Naive thymus-derived CD4-positive, alpha-beta T cell (primary cell): ENCODE measurements at regions of chr2 and their contacts with region 1.

Region 1: DNA sequence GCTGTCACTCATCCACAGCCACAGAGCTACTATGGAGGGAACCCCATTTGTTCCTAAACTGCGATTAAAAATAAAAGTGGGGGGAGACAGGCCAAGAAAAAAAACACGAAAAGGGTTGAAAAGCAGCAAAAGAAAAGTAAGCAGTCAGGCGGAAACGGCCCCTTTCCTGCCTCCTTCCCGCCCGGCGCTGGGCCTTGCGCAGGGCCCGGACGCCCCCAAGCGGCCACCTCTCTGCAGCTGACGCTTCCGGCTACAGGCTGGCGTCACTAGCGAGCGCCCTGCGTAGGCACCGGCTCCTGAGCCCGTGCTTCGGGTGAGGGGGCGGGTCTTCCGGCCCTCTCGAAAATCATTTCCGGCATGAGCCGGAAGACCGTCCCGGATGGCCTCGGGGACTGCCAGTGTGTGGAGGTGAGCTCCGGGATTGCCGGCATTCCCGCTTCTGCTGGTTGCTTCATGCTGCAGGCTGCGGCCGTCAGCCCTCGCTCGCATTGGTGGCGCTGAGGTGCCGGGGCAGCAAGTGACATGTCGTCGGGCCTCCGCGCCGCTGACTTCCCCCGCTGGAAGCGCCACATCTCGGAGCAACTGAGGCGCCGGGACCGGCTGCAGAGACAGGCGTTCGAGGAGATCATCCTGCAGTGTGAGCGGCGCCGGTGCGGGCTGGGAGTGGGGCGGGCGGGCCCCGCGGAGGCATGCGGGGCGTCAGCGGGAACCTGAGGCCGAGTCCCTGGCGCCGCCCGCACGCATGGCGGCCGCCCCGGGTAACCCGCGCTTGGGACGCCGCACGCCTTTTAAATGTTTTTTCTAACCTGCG is at the start of gene ATG16L1:
- DNase-seq: peak; percentile 85 to 96 (median 95)
- ATAC-seq: peak; percentile 99
- H3K4me3 ChIP-seq: peak within 1 kb of the TSS; percentile 80
- H3K4me3 Mint-ChIP-seq: peak within 1 kb of the TSS; percentile 86 to 96 (median 92)
- H3K27ac ChIP-seq: peak within 1 kb of the TSS; percentile 81
- H3K27ac Mint-ChIP-seq: peak within 1 kb of the TSS; percentile 89 to 98 (median 93)
- H3K4me1 ChIP-seq: peaks cover 36 to 50% of the 10 kb centered on the region in 2 donors
- H3K4me1 Mint-ChIP-seq: peaks cover 47 to 81% (median 74%) of the 10 kb centered on the region in 7 donors
- H3K27me3 ChIP-seq: no peaks in the 10 kb centered on the region
- H3K27me3 Mint-ChIP-seq: no peaks in the 10 kb centered on the region
- total RNA-seq, gene ATG16L1: 61.7 to 115 (median 83.3) TPM

Region 2: GRCh38 chr2:232611551-232612218 is 639.8 kb before region 1 on chr2:
- CTCF ChIA-PET with region 1: no interaction called
- POLR2A ChIA-PET with region 1: no interaction called
- intact Hi-C with region 1: loop called (anchors 1 kb)
- DNase-seq: peak; percentile 18 to 72 (median 48)
- ATAC-seq: peak; percentile 72
- H3K4me3 ChIP-seq: no peak overlapping the region
- H3K4me3 Mint-ChIP-seq: no peak overlapping the region
- H3K27ac ChIP-seq: no peak overlapping the region
- H3K27ac Mint-ChIP-seq: no peak overlapping the region
- H3K4me1 ChIP-seq: no peaks in the 10 kb centered on the region
- H3K4me1 Mint-ChIP-seq: no peaks in the 10 kb centered on the region
- H3K27me3 ChIP-seq: no peaks in the 10 kb centered on the region
- H3K27me3 Mint-ChIP-seq: no peaks in the 10 kb centered on the region

Region 3: GRCh38 chr2:232838406-232838874 is 413.1 kb before region 1 on chr2:
- CTCF ChIA-PET with region 1: no interaction called
- POLR2A ChIA-PET with region 1: no interaction called
- intact Hi-C with region 1: loop called in 1 of 2 experiments (anchors 1 kb)
- DNase-seq: peak in 7 of 9 donors; percentile 8 to 57 (median 10)
- ATAC-seq: peak; percentile 83
- H3K4me3 ChIP-seq: no peak overlapping the region
- H3K4me3 Mint-ChIP-seq: peak overlapping the region in 8 of 10 donors; percentile 20 to 74 (median 39)
- H3K27ac ChIP-seq: peak overlapping the region; percentile 40
- H3K27ac Mint-ChIP-seq: peak overlapping the region; percentile 53 to 89 (median 83)
- H3K4me1 ChIP-seq: peaks cover 13 to 15% of the 10 kb centered on the region in 2 donors
- H3K4me1 Mint-ChIP-seq: peaks cover 27 to 39% (median 35%) of the 10 kb centered on the region in 7 donors
- H3K27me3 ChIP-seq: no peaks in the 10 kb centered on the region
- H3K27me3 Mint-ChIP-seq: no peaks in the 10 kb centered on the region

Region 4: DNA sequence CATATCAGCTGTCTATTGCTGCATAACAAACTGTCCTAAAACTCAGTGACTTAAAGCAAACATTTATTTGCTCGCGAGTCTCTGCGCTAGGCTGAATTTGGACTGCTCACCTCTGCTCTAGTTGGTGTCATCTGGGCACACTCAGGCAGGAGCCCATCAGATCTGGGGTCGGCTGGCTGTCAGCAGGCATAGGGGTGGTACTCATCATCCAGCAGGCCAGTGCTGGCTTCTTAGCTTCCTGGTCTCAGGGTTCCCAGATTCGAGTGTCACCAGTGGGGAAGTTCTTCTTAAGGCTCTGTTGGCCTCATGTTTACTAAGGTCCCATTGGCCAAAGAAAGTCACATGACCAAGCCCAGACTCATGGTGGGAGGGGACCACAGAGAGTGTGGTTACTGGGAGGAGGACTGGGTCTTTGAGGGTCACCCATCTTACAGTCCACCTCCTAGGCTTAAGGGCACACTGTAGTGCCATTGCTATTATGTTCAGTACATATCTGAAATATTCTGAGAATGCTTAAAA is 71.6 kb before region 1 on chr2:
- CTCF ChIA-PET with region 1: interaction called, 4 read pairs
- POLR2A ChIA-PET with region 1: no interaction called
- intact Hi-C with region 1: loop called (anchors 5 kb)
- DNase-seq: no peak
- ATAC-seq: peak; percentile 63
- H3K4me3 ChIP-seq: no peak overlapping the region
- H3K4me3 Mint-ChIP-seq: no peak overlapping the region
- H3K27ac ChIP-seq: no peak overlapping the region
- H3K27ac Mint-ChIP-seq: peak overlapping the region in 8 of 9 donors; percentile 10 to 86 (median 70)
- H3K4me1 ChIP-seq: no peaks in the 10 kb centered on the region
- H3K4me1 Mint-ChIP-seq: peaks cover 0 to 13% (median 5%) of the 10 kb centered on the region in 7 donors
- H3K27me3 ChIP-seq: no peaks in the 10 kb centered on the region
- H3K27me3 Mint-ChIP-seq: no peaks in the 10 kb centered on the region

Region 5: DNA sequence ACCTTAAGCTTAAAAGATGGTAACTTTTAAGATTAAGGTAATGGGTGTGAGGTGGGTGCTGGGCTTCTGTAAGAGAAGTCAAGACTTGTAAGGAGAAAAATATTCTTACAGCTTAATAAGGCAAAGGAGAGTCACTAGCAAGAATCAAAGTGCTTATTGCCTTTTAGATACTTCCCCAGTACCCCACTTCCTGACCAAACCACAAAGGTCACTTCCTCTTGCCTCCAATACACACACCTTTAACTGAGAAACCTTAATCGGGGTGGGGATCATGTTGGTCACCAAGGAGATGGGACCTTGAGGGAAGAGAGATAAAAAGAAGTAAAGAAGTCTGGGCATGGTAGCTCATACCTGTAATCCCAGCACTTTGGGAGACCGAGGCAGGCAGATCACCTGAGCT is 10.6 kb before region 1 on chr2:
- CTCF ChIA-PET with region 1: interaction called, 3 read pairs
- POLR2A ChIA-PET with region 1: interaction called, 15 read pairs
- intact Hi-C with region 1: no loop called
- DNase-seq: peak in 4 of 9 donors; percentile 14 to 30 (median 25)
- ATAC-seq: peak; percentile 40
- H3K4me3 ChIP-seq: peak overlapping the region; percentile 47
- H3K4me3 Mint-ChIP-seq: peak overlapping the region; percentile 20 to 85 (median 75)
- H3K27ac ChIP-seq: peak overlapping the region; percentile 41
- H3K27ac Mint-ChIP-seq: peak overlapping the region; percentile 23 to 90 (median 86)
- H3K4me1 ChIP-seq: peaks cover 32 to 40% of the 10 kb centered on the region in 2 donors
- H3K4me1 Mint-ChIP-seq: peaks cover 43 to 71% (median 59%) of the 10 kb centered on the region in 7 donors
- H3K27me3 ChIP-seq: no peaks in the 10 kb centered on the region
- H3K27me3 Mint-ChIP-seq: no peaks in the 10 kb centered on the region

Region 6: DNA sequence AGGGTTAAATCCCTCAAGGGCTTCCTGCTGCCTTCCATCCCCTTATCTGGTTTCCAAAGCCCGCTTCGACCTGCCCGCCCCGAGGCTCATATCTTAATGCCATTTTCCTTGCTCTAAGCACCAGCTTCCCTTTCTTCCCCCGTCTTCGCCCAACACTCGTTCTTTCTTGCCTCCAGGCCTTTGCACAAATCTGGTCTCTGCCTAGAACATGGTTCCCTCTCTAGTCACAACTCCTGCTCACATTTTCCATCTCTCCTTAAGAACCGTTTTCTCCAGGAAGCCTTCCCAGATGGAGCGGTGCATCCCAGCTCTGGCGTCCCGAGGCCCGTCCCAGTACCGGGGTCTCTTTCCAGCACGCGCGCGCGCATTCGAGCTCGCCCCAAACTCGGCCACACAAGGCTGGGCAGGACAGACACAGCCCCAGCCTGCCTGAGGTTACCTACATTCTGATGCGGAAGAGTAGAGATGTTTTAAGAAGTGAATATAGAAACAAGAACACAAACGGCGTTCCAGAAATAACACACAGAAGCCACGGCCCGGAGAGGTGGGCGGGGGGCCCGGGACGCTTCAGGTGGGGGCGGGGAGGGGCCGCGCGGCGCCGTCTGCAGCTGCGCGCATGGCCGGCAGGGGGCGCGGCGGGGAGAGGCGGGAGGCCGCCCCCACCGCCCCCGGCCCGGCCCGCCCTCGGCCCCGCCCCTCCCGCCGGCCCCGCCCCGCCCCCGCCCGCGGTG is 102.4 kb after region 1 on chr2 and contains the start of gene DGKD:
- CTCF ChIA-PET with region 1: interaction called, 3 read pairs
- POLR2A ChIA-PET with region 1: interaction called, 4 read pairs
- intact Hi-C with region 1: loop called in 1 of 2 experiments (anchors 1 kb)
- DNase-seq: peak; percentile 42 to 81 (median 69)
- ATAC-seq: peak; percentile 96
- H3K4me3 ChIP-seq: peak within 1 kb of the TSS; percentile 83
- H3K4me3 Mint-ChIP-seq: peak within 1 kb of the TSS; percentile 92 to 98 (median 94)
- H3K27ac ChIP-seq: peak within 1 kb of the TSS; percentile 72
- H3K27ac Mint-ChIP-seq: peak within 1 kb of the TSS; percentile 86 to 96 (median 92)
- H3K4me1 ChIP-seq: peaks cover 36 to 42% of the 10 kb centered on the region in 2 donors
- H3K4me1 Mint-ChIP-seq: peaks cover 57 to 74% (median 67%) of the 10 kb centered on the region in 7 donors
- H3K27me3 ChIP-seq: no peaks in the 10 kb centered on the region
- H3K27me3 Mint-ChIP-seq: no peaks in the 10 kb centered on the region
- total RNA-seq, gene DGKD: 61.6 to 252 (median 213) TPM